ENCODE measurements at regions of chr17 and their contacts with region 1.

Region 1: DNA sequence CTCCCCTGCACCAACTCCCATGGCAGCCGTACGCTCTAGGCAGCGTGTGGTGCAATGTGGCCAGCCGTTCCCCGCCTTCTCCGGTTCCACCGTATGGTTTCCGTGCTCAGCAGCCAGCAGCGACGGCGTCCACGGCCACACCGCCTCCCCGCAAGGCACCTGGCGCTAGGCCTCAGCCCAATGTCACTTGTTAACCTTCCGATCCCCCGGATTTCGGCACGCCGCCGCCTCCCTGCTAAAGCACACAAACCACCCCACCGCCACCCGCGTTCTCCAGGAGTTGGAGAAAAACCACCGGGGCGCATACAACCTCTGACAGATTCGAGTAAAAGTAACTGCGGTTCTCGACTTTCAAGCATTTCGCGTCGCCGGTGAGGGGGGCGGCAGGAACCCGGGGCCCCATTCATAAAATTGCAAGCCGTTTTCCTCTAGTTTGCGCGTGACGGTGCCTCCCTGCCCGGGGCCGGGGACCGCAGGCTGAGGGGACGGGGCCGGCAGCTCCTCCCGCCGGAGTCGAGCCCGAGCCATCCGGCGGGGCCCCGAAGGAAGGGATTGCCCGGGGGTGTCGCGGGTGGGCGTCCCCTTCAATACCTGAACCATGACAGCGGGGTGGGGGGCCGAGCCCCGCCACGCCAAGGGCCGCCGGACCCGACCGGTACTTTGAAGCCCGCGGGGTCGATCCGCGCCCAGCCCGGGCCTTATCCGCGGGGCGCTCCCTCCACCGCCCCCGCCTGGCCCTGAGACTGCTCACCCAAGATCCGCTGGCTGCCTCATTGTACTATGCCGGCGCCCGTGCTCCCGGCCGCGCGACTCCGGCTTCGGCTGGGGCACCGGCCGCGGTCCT is at the start of gene TEX2:
- DNase-seq: peak; percentile 3 to 79 (median 56)

Region 2: GRCh38 chr17:63827002-63827771 is 435.5 kb before region 1 on chr17 and contains the starts of genes FTSJ3 and PSMC5:
- intact Hi-C with region 1: no loop called
- DNase-seq: peak; percentile 96 to 99 (median 98)

Region 3: GRCh38 chr17:64155751-64156544 is 106.7 kb before region 1 on chr17:
- intact Hi-C with region 1: loop called (anchors 5 kb)
- DNase-seq: peak; percentile 43 to 94 (median 83)

Region 4: DNA sequence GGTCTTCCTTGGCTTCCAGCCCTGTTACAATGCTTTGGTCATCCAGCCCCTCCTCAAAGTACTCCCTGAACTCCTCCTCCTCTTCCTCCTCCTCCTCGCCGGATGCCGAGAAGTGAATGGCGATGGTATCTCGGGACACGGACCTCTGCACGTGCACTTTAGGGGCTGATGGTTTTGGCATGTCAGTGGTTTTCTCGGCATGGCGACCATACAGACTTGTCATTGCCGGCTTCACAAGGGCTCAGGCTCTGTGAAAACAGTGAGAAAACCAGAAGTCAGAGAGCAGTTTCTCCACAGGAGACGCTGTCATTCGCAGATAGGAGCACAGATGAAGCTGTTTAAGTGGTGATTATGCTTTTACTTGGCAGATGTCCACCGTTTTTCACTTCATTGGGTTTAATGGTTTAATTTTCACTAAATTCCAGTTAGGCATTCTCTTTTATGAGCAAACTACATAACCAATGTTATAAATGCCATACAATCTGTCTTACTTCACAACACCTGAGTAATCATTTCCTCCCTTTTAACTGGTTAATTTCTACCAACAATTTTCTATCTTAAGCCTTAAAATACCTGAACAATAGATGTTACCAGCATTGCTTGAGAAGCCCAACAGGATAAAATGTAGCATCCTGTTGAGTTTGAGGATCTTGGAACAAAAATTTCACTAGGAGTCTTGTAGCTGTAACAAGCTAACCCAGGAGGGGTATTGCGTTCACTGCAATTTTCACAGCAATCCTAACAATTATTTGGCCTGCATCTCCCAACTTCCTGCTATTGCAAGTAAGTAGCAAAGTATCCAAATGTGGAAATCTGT is 48.4 kb before region 1 on chr17:
- intact Hi-C with region 1: loop called (anchors 5 kb)
- DNase-seq: no peak

Region 5: DNA sequence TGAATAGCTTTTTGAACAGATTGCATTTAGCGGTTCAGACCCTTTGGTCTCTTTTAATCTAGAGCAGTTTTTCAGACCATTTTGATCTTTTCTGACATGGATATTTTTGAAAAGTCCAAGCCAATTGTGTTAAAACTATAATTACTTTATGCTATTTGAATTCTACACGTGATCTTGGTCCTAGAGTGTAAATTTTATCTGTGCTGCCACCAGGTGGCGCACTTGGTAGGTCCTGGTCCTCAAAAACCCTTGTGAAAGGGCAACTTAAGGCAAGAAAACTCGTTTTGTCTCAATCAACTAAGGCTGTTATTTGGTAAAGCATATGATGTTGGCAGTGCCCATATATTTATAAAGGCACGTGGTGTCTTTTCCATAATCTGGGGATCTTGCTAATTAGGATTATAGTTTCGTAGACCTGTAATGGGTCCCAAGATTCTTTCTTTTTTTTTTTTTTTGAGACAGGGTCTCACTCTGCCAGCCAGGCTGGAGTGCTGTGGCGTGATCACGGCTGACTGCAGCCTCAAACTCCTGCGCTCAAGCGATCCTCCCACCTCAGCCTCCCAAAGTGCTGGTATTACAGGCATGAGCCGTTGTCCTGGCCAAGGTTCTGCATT is 44.3 kb after region 1 on chr17:
- intact Hi-C with region 1: no loop called
- DNase-seq: peak in 41 of 42 donors; percentile 33 to 87 (median 68)

Region 6: GRCh38 chr17:64653325-64653984 is 390.8 kb after region 1 on chr17:
- intact Hi-C with region 1: no loop called
- DNase-seq: no peak